Breast epithelium (tissue), 4 donors: ENCODE measurements at regions of chr11 and their contacts with region 1.

Region 1: GRCh38 chr11:790721-791564 is 1.1 kb upstream of the CEND1 start:
- DNase-seq: no peak
- H3K4me3 ChIP-seq: no peak overlapping the region
- H3K27ac ChIP-seq: no peak overlapping the region
- H3K4me1 ChIP-seq: peaks cover 4% of the 10 kb centered on the region in 2 donors
- H3K27me3 ChIP-seq: peaks cover 0 to 11% of the 10 kb centered on the region in 2 donors
- CTCF ChIP-seq: no peak
- POLR2A ChIP-seq: no peak

Region 2: DNA sequence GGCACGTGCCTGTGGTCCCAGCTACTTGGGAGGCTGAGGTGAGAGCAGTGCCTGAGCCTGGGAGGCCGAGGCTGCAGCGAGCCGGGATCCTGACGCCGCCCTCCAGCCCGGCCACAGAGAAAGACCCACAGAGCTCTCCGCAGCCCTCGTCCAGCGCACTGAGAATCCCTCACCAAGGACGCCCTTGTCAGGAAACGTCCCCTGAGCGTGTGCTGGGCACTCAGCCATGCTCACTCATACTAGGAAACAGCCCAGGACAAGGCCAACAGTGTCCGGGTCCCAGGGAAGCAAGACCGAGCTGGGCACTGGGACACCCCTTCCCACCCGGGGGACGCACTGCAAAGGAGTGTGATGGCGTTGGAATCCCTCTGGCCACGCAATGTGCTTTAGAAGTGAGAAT is 110.5 kb before region 1 on chr11:
- intact Hi-C with region 1: no loop called
- DNase-seq: no peak
- H3K4me3 ChIP-seq: no peak overlapping the region
- H3K27ac ChIP-seq: no peak overlapping the region
- H3K4me1 ChIP-seq: no peaks in the 10 kb centered on the region
- H3K27me3 ChIP-seq: no peaks in the 10 kb centered on the region
- CTCF ChIP-seq: no peak
- POLR2A ChIP-seq: no peak

Region 3: DNA sequence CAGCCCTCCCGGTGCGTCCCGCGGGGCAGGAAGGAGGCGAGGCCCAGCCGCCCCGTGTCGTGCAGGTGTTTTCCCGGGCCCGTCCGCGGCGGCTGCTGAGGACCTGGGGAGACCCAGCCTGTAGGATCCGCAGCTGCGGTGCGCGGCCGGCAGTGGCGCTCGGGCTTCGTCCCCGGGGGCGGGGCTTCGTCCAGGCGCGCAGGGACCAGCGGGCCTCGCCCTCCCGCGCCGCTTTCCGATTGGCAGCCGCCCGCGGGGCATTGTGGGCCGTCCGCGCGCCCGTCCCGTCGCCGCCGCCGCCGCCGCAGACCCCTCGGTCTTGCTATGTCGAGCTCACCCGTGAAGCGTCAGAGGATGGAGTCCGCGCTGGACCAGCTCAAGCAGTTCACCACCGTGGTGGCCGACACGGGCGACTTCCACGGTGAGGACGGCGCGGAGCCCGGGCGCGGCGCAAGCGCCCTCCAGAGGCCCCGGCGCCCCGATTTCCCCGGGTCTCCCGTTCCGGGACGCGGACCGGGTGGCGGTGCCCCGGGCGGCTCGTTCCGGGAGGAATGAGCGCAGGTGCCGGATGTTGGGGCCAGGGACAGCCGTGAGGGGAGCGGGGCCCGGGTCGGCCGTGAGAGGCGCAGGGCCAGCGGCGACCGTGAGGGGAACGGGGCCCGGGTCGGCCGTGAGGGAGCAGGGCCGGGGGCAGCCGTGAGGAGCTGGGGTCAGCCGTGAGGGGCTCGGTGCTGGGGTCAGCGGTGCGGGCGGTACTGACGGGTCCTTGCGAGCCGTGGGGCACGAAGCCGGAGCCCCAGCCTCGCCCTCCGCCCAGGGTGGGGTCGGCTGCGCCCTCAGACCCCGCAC is 43.6 kb before region 1 on chr11 and contains the start of gene TALDO1:
- intact Hi-C with region 1: no loop called
- DNase-seq: peak; percentile 86 to 91
- H3K4me3 ChIP-seq: peak within 1 kb of the TSS; percentile 84 to 97 (median 89)
- H3K27ac ChIP-seq: peak within 1 kb of the TSS; percentile 81 to 84
- H3K4me1 ChIP-seq: peaks cover 0 to 9% of the 10 kb centered on the region in 2 donors
- H3K27me3 ChIP-seq: no peaks in the 10 kb centered on the region
- CTCF ChIP-seq: peak in 1 of 3 donors; percentile 24
- POLR2A ChIP-seq: no peak
- total RNA-seq, gene TALDO1: 137 to 239 (median 141) TPM

Region 4: GRCh38 chr11:765025-765801 is 25.7 kb before region 1 on chr11:
- intact Hi-C with region 1: loop called (anchors 1 kb)
- DNase-seq: peak in 1 of 2 donors; percentile 50
- H3K4me3 ChIP-seq: no peak overlapping the region
- H3K27ac ChIP-seq: peak overlapping the region in 1 of 2 donors; percentile 19
- H3K4me1 ChIP-seq: peaks cover 0 to 4% of the 10 kb centered on the region in 2 donors
- H3K27me3 ChIP-seq: no peaks in the 10 kb centered on the region
- CTCF ChIP-seq: peak; percentile 48 to 64 (median 62)
- POLR2A ChIP-seq: no peak

Region 5: DNA sequence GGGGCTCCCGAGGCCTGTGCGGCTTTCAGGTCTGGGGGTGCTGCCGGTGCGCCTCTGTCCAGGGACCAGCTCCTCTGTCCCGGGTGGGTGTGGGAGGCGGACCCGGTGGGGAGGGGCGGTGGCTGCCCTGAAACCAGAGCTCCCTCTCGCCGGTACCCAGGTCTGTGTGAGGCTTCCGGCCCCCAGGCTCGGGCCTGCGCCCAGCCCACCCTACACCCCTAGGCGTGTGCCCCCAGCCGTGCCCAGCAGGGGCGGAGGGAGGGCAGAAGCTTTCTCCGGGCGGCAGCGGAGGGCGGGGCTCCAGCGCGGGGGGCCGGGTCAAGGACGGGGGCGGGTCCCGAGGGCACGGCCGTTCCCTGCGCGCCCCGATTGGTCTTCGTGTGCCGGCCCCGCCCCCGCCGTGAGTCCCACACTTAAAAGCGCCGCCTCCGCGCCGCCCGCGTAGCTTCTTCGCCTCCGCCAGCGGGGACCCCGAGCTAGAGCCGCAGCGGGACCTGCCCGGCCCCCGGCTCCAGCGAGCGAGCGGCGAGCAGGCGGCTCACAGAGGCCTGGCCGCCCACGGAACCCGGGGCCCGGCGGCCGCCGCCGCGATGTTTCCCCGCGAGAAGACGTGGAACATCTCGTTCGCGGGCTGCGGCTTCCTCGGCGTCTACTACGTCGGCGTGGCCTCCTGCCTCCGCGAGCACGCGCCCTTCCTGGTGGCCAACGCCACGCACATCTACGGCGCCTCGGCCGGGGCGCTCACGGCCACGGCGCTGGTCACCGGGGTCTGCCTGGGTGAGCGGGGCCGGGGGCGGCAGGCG is 28.4 kb after region 1 on chr11:
- intact Hi-C with region 1: no loop called
- DNase-seq: peak; percentile 90 to 98
- H3K4me3 ChIP-seq: peak overlapping the region; percentile 82 to 100 (median 94)
- H3K27ac ChIP-seq: peak overlapping the region; percentile 98 to 100
- H3K4me1 ChIP-seq: peaks cover 12 to 25% of the 10 kb centered on the region in 2 donors
- H3K27me3 ChIP-seq: no peaks in the 10 kb centered on the region
- CTCF ChIP-seq: peak; percentile 25 to 60 (median 56)
- POLR2A ChIP-seq: peak; percentile 10

Region 6: GRCh38 chr11:870127-870413 is 79.1 kb after region 1 on chr11:
- intact Hi-C with region 1: no loop called
- DNase-seq: no peak
- H3K4me3 ChIP-seq: no peak overlapping the region
- H3K27ac ChIP-seq: no peak overlapping the region
- H3K4me1 ChIP-seq: no peaks in the 10 kb centered on the region
- H3K27me3 ChIP-seq: no peaks in the 10 kb centered on the region
- CTCF ChIP-seq: no peak
- POLR2A ChIP-seq: no peak